Posterior vena cava (tissue), 2 donors: ENCODE measurements at regions of chr1 and their contacts with region 1.

Region 1: DNA sequence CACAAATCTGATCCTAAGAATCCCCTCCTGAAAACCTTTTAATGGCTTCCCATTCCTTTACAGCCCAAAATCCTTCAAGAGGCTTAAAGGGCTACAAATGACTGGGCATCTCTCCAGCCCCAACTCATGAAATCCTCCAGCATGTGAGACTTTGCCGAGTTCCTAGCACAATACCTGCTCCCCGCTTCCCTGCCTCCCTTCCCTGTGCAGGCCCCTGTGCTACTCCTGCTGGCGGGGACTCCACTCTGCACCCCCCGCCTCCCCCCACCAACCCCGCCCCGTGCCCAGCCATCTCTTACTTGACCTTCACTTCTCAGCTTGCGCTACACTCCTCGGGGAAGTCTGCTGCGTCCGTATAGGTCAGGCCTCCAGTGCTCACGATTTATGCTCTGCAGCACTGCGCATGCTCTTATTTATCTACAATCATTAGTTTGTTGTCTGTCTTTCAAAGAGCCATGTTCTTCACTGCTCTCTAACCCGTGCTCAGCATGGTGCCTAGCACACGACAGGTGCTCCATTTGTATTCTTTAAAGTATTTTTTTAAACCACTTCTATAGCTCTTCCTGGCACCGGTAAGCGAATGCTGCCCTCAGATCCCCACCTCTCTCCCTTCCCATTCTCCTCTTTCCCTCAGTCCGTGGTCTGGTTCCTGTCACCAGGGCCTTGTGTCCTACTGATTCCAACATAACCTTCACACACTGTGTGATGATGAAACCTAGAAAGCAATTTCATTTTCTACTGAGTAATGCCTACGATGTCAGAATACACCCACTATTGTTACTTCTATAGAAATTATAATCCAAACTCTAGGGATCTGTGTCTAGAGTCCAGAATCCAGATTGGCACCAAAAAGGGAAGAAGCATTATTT is 37.5 kb upstream of the PLA2G2C start:
- DNase-seq: no peak

Region 2: GRCh38 chr1:20137043-20137442 is 86.7 kb before region 1 on chr1:
- intact Hi-C with region 1: no loop called
- DNase-seq: peak; percentile 2

Region 3: DNA sequence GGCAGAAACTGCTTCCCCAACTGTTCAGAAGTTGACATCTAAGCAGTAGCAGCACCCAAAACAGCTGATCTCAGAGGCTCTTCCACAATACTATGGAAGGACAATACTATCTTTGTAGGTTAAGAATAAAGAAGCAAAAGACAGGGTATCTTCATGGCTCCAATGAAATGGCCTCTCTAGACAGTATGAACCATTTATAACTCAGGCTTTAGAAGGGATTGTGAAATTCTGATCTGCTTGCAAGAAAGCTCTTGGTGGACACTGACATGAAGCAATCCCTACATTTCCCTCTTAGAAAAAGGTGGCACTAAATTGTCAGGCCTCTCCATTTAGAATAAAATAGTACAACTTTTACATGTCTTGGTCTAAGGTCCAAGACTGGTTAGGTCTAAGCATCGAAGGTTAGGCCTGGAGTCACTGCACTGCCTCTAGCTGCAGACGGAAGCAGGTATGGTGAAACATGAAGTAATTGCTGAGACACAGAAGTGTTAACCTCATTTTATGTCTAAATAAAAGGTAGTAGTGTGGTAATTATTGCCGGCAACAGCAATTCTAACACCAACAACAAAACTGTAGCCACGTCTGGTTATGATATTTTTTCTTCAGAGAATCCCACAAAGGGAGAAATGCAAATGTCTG is 613.9 kb after region 1 on chr1:
- intact Hi-C with region 1: loop called in 1 of 2 experiments (anchors 5 kb)
- DNase-seq: no peak